ENCODE measurements at regions of chr3 and their contacts with region 1.

Region 1: GRCh38 chr3:49445381-49445780 is 16.3 kb upstream of the NICN1 start:
- DNase-seq: no peak
- H3K4me3 ChIP-seq: no peak overlapping the region
- H3K27ac ChIP-seq: no peak overlapping the region
- H3K4me1 ChIP-seq: no peaks in the 10 kb centered on the region
- H3K27me3 ChIP-seq: no peaks in the 10 kb centered on the region
- CTCF ChIP-seq: no peak
- POLR2A ChIP-seq: no peak

Region 2: GRCh38 chr3:49295489-49296058 is 149.8 kb before region 1 on chr3:
- intact Hi-C with region 1: loop called (anchors 10 kb)
- DNase-seq: no peak
- H3K4me3 ChIP-seq: no peak overlapping the region
- H3K27ac ChIP-seq: no peak overlapping the region
- H3K4me1 ChIP-seq: no peaks in the 10 kb centered on the region
- H3K27me3 ChIP-seq: no peaks in the 10 kb centered on the region
- CTCF ChIP-seq: peak in 3 of 4 experiments; percentile 32 to 49 (median 37)
- POLR2A ChIP-seq: no peak

Measured in prostate gland (tissue), 2 donors.